H1 (cell line): ENCODE measurements at regions of chr3 and their contacts with region 1.

Region 1: DNA sequence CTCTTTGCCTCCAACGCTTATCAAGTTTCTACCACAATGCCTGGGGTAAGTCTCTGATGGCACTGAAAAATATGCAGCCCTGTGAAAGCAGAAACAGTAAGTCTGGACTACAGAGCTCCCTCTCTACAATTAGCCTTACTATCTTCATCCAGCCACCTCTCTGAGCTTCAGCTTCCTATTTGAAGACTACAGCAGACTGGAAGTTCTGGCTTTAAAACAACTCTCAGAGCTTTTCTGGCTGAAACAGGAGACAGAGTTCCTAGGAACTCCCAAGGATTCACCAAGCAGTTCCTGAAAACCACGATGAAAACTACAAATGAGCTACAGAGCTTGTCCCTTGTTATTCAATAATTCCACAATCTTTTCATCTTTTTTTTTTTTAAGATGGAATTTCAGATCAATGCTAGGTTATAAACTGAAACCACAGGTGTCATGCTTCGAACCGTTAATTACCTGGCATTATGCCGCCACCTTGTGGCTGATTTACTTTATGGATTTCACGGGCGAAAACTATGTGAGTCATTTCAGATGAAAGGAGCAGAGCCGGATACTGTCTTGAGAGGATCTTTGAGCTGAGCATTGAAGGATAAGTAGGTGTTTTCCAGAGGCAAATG is 3.9 kb downstream of the CRYGS start:
- DNase-seq: peak; percentile 39 to 83
- H3K4me3 ChIP-seq: no peak overlapping the region
- H3K27ac ChIP-seq: no peak overlapping the region
- H3K4me1 ChIP-seq: no peaks in the 10 kb centered on the region
- H3K27me3 ChIP-seq: no peaks in the 10 kb centered on the region
- CTCF ChIP-seq: peak in 2 of 3 experiments; percentile 75 to 77; a peak in 3 of 4 replicates
- EP300 ChIP-seq: no peak
- POLR2A ChIP-seq: no peak
- RAD21 ChIP-seq: peak; percentile 94 to 95

Region 2: DNA sequence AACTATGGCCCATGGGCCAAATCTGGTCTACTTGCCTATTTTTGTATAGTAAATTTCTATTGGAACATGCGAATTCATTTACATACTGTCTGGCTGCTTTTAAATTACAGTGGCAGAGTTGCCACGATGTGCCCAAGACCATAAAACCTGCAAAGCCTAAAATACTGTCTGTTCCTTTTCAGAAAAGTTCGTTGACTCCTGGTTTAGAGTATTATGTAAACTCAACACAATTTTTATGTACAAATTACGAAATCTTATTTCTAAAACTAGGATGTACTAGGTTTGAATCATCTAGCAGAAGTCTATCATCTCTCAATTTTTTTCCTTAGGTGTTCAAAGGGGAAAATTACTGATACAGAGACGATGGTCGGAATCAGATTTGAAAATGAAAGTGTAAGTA is 927.3 kb before region 1 on chr3:
- CTCF ChIA-PET with region 1: no interaction called
- POLR2A ChIA-PET with region 1: no interaction called
- DNase-seq: no peak
- H3K4me3 ChIP-seq: no peak overlapping the region
- H3K27ac ChIP-seq: no peak overlapping the region
- H3K4me1 ChIP-seq: no peaks in the 10 kb centered on the region
- H3K27me3 ChIP-seq: no peaks in the 10 kb centered on the region
- CTCF ChIP-seq: no peak
- EP300 ChIP-seq: no peak
- POLR2A ChIP-seq: no peak
- RAD21 ChIP-seq: no peak

Region 3: DNA sequence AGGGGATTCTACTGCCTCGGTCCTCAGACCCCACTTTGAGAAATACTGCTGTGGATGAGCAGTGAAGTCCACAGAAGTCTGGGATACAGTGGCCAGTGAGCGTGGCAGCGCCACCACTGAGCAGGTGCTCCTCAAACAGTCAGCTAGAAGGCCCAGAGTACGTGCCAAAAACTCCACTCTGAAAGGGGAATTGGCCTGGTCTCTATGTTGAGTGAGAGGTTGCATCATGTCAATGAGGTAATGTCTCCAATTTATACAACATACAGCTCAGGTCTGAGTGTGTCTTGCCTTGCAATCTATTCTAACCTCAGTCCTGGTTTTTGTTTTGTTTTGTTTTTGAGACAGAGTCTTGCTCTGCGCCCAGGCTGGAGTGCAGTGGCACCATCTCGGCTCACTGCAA is 378.1 kb before region 1 on chr3:
- CTCF ChIA-PET with region 1: no interaction called
- POLR2A ChIA-PET with region 1: no interaction called
- DNase-seq: no peak
- H3K4me3 ChIP-seq: no peak overlapping the region
- H3K27ac ChIP-seq: no peak overlapping the region
- H3K4me1 ChIP-seq: no peaks in the 10 kb centered on the region
- H3K27me3 ChIP-seq: no peaks in the 10 kb centered on the region
- CTCF ChIP-seq: no peak
- EP300 ChIP-seq: no peak
- POLR2A ChIP-seq: no peak
- RAD21 ChIP-seq: no peak

Region 4: DNA sequence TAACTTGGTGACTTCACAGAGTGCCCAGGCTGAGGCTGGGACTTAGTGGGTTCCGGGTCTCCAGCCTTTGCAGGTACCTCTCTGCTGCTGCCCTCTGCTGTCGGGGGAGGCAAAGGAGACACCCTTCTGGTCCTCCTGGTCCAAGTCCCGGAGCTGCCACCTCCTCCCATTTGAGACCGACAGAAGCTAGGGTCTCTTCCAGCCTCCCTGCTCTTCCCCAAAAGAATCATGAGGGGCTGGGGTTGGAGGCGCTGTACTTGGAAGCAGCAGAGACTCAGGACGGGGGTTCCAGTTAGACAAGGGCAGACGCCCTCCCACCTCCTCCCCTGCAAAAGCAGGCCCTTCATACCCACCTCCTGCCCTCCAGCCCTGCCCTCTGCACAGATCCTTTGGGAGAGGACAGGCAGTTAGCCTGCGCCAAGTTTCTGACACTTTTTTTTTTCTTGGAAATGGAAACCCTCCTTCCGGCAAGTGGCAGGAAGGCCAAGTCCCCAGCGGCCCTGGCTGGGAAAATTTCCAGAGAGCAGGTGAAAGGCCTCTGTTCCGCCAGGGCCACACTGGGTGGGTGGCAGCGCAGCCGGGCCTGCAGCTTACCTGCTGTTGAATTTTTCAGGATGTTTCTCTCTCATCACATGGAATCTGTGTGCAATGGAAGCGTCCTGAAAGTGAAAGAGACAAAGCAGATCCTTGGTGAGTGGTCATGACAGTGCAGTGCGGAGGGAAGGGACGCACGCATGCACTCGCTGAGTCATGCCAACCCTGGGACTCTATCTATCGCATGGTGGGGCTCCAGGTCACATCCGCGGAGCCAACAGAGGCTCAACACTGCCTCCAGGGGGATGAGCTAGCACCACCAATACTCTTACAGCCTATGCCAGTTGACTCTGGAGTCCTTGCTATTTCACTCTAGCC is 298.2 kb before region 1 on chr3:
- CTCF ChIA-PET with region 1: interaction called, 34 read pairs
- POLR2A ChIA-PET with region 1: no interaction called
- DNase-seq: peak; percentile 64 to 80
- H3K4me3 ChIP-seq: peak overlapping the region in 3 of 4 experiments; percentile 7 to 13 (median 12); a peak in 3 of 8 replicates
- H3K27ac ChIP-seq: no peak overlapping the region
- H3K4me1 ChIP-seq: peaks cover 0 to 6% (median 2%) of the 10 kb centered on the region in 4 experiments; a peak in 3 of 7 replicates
- H3K27me3 ChIP-seq: no peaks in the 10 kb centered on the region
- CTCF ChIP-seq: peak; percentile 75 to 91 (median 87)
- EP300 ChIP-seq: no peak
- POLR2A ChIP-seq: no peak
- RAD21 ChIP-seq: peak; percentile 87 to 89

Region 5: DNA sequence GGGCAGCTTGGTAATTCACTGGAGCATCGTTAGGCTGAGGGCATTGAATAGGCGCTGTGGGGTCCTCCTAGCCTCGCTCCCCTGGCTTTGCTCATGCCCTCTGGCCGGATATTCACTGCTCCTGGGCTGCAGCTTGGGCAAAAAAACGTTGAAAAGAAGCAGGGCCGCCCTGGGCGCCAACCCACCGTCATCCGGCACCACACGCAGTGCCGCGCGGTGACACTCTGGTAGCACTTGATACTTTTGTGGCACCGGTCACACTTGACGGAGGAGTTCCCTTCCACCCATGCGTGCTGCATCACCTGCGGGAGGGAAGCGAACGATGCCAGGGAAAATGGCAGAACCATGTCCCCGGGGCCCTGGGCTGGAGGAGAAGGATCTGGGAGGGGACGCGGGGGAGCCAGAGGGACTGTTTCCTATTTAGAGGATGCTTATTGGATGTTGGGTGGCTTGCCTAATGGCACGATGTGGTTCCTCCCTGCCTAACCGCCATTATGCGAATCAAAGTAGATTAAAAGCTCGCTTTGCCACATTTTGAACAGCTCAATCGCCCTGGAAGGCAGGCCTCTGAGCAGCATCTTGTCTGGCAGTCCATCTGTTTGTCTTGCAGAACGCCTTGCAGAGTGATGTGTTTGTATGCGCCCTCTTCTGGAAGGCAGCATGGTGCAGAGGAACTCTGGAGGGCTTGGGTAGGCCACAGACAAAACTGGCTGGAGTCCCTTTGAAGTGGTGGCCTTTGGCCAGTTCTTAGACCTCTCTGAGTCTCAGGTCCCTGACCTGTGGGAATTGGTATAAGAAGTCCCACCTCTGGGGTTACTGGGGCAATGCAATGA is 271.5 kb before region 1 on chr3:
- CTCF ChIA-PET with region 1: interaction called, 146 read pairs
- POLR2A ChIA-PET with region 1: no interaction called
- DNase-seq: peak in 1 of 2 experiments; percentile 62
- H3K4me3 ChIP-seq: no peak overlapping the region
- H3K27ac ChIP-seq: no peak overlapping the region
- H3K4me1 ChIP-seq: no peaks in the 10 kb centered on the region
- H3K27me3 ChIP-seq: no peaks in the 10 kb centered on the region; a peak in 1 of 7 replicates
- CTCF ChIP-seq: peak; percentile 56 to 68 (median 59)
- EP300 ChIP-seq: no peak
- POLR2A ChIP-seq: no peak
- RAD21 ChIP-seq: peak; percentile 42 to 52

Region 6: GRCh38 chr3:186464424-186465093 is 75.8 kb before region 1 on chr3:
- CTCF ChIA-PET with region 1: interaction called, 14 read pairs
- POLR2A ChIA-PET with region 1: no interaction called
- DNase-seq: peak in 1 of 2 experiments; percentile 44
- H3K4me3 ChIP-seq: no peak overlapping the region
- H3K27ac ChIP-seq: no peak overlapping the region
- H3K4me1 ChIP-seq: no peaks in the 10 kb centered on the region
- H3K27me3 ChIP-seq: no peaks in the 10 kb centered on the region
- CTCF ChIP-seq: peak; percentile 38 to 65 (median 44)
- EP300 ChIP-seq: no peak
- POLR2A ChIP-seq: no peak
- RAD21 ChIP-seq: peak; percentile 23 to 50; a peak in 3 of 4 replicates

Region 7: GRCh38 chr3:186520957-186521842 is 19.1 kb before region 1 on chr3:
- CTCF ChIA-PET with region 1: interaction called, 55 read pairs
- POLR2A ChIA-PET with region 1: interaction called, 4 read pairs
- DNase-seq: peak in 1 of 2 experiments; percentile 42
- H3K4me3 ChIP-seq: no peak overlapping the region
- H3K27ac ChIP-seq: no peak overlapping the region
- H3K4me1 ChIP-seq: no peaks in the 10 kb centered on the region
- H3K27me3 ChIP-seq: no peaks in the 10 kb centered on the region; a peak in 1 of 7 replicates
- CTCF ChIP-seq: no peak
- EP300 ChIP-seq: no peak
- POLR2A ChIP-seq: no peak
- RAD21 ChIP-seq: no peak

Region 8: DNA sequence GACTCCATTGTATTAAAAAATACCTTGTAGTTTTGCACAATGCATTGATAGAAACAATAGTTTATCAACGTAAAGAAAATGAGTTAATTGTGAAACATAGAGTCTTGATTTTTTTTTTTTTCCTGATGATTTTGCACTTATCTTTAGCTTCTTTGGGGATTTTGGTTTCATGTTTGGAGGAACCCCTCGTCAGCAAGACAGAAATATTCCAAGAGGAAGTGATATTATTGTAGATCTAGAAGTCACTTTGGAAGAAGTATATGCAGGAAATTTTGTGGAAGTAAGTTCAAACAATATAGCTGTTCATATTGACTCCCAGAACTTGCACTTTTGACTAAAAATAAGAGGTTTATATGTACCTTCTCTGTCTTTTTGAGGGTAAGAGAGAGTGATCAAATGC is 37.2 kb after region 1 on chr3:
- CTCF ChIA-PET with region 1: no interaction called
- POLR2A ChIA-PET with region 1: no interaction called
- DNase-seq: no peak
- H3K4me3 ChIP-seq: no peak overlapping the region
- H3K27ac ChIP-seq: no peak overlapping the region
- H3K4me1 ChIP-seq: no peaks in the 10 kb centered on the region
- H3K27me3 ChIP-seq: no peaks in the 10 kb centered on the region
- CTCF ChIP-seq: no peak
- EP300 ChIP-seq: no peak
- POLR2A ChIP-seq: no peak
- RAD21 ChIP-seq: no peak

Region 9: GRCh38 chr3:187130346-187131066 is 590.2 kb after region 1 on chr3:
- CTCF ChIA-PET with region 1: no interaction called
- POLR2A ChIA-PET with region 1: no interaction called
- DNase-seq: no peak
- H3K4me3 ChIP-seq: no peak overlapping the region
- H3K27ac ChIP-seq: no peak overlapping the region
- H3K4me1 ChIP-seq: no peaks in the 10 kb centered on the region
- H3K27me3 ChIP-seq: peaks cover 0 to 2% (median 0%) of the 10 kb centered on the region in 4 experiments; a peak in 1 of 7 replicates
- CTCF ChIP-seq: no peak
- EP300 ChIP-seq: no peak
- POLR2A ChIP-seq: no peak
- RAD21 ChIP-seq: no peak